PC-9 (cell line): ENCODE measurements at regions of chr6 and their contacts with region 1.

Region 1: GRCh38 chr6:114108119-114109002 is 137.4 kb upstream of the HDAC2 start:
- DNase-seq: peak; percentile 60 to 66
- H3K4me3 ChIP-seq: no peak overlapping the region
- H3K27ac ChIP-seq: no peak overlapping the region
- H3K4me1 ChIP-seq: no peaks in the 10 kb centered on the region
- H3K27me3 ChIP-seq: no peaks in the 10 kb centered on the region
- CTCF ChIP-seq: peak; percentile 87

Region 2: GRCh38 chr6:114131948-114132347 is 23.6 kb after region 1 on chr6:
- CTCF ChIA-PET with region 1: no interaction called
- POLR2A ChIA-PET with region 1: no interaction called
- intact Hi-C with region 1: no loop called
- DNase-seq: no peak
- H3K4me3 ChIP-seq: no peak overlapping the region
- H3K27ac ChIP-seq: no peak overlapping the region
- H3K4me1 ChIP-seq: no peaks in the 10 kb centered on the region
- H3K27me3 ChIP-seq: no peaks in the 10 kb centered on the region
- CTCF ChIP-seq: no peak

Region 3: GRCh38 chr6:114218437-114219340 is 110.3 kb after region 1 on chr6:
- CTCF ChIA-PET with region 1: no interaction called
- POLR2A ChIA-PET with region 1: interaction called, 14 read pairs
- intact Hi-C with region 1: no loop called
- DNase-seq: no peak
- H3K4me3 ChIP-seq: no peak overlapping the region
- H3K27ac ChIP-seq: no peak overlapping the region
- H3K4me1 ChIP-seq: no peaks in the 10 kb centered on the region
- H3K27me3 ChIP-seq: no peaks in the 10 kb centered on the region
- CTCF ChIP-seq: no peak

Region 4: GRCh38 chr6:115896538-115897129 is 1788.3 kb after region 1 on chr6:
- CTCF ChIA-PET with region 1: no interaction called
- POLR2A ChIA-PET with region 1: no interaction called
- intact Hi-C with region 1: loop called (anchors 10 kb)
- DNase-seq: no peak
- H3K4me3 ChIP-seq: no peak overlapping the region
- H3K27ac ChIP-seq: no peak overlapping the region
- H3K4me1 ChIP-seq: peaks cover 9% of the 10 kb centered on the region; the same call in 1 of the 2 replicates
- H3K27me3 ChIP-seq: no peaks in the 10 kb centered on the region
- CTCF ChIP-seq: peak; percentile 96